Caco-2 (cell line): ENCODE measurements at regions of chr1 and their contacts with region 1.

Region 1: GRCh38 chr1:91282695-91283420 is 121.8 kb downstream of the HFM1 start:
- DNase-seq: peak; percentile 41 to 53
- H3K4me3 ChIP-seq: no peak overlapping the region
- H3K4me3 Mint-ChIP-seq: no peak overlapping the region
- H3K27ac Mint-ChIP-seq: no peak overlapping the region
- H3K4me1 ChIP-seq: no peaks in the 10 kb centered on the region
- H3K4me1 Mint-ChIP-seq: no peaks in the 10 kb centered on the region
- H3K27me3 ChIP-seq: no peaks in the 10 kb centered on the region
- H3K27me3 Mint-ChIP-seq: no peaks in the 10 kb centered on the region
- CTCF ChIP-seq: peak; percentile 57 to 63

Region 2: DNA sequence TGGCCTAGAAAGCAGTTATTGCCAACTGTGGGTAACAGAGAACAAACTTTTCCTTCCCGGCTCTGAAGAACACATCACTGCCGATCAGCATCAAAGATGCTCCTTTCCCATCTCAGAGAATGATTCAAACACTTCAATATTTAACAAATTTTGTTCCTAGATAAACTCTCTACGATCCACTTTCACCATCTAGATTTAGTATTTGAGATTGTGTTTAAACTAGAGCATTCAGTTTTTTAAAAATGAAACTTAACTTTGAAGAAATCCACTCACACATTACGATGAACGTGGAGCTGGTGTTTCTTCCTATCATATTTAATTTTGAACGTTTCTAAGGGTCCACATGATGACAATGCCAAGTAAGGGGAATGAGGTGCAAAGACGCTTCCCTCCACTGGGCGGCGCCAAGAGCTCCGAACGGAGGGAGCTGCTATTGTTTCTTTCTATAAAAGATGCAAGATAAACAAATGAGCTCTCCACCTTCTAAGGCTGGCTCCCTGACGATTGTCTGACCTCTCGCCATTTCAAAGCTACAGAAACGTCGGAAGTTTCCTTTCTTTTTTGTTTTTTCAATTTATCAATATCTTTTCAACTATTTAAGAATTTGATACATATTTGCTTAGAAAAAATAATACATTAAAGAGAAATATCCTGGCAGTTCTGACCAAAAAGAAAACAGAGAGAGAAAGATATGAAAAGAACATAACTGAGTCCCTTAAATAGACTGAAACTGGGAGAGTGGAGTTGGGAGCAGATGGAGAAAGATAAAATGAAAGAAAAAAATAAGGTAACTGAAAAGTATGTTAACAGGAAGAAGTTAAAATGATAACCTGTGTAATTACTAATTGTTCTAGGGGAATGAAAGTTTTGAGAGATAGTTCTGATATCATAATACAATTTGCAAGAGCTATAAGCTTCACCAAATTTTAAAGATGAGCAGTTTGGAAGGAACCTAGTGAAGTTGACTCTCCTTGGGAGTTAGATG is 561.4 kb before region 1 on chr1:
- CTCF ChIA-PET with region 1: no interaction called
- POLR2A ChIA-PET with region 1: no interaction called
- intact Hi-C with region 1: loop called (anchors 2 kb)
- DNase-seq: peak in 1 of 2 experiments; percentile 57
- H3K4me3 ChIP-seq: no peak overlapping the region
- H3K4me3 Mint-ChIP-seq: no peak overlapping the region
- H3K27ac Mint-ChIP-seq: no peak overlapping the region
- H3K4me1 ChIP-seq: no peaks in the 10 kb centered on the region
- H3K4me1 Mint-ChIP-seq: no peaks in the 10 kb centered on the region
- H3K27me3 ChIP-seq: no peaks in the 10 kb centered on the region
- H3K27me3 Mint-ChIP-seq: peaks cover 5% of the 10 kb centered on the region
- CTCF ChIP-seq: peak; percentile 55 to 68

Region 3: DNA sequence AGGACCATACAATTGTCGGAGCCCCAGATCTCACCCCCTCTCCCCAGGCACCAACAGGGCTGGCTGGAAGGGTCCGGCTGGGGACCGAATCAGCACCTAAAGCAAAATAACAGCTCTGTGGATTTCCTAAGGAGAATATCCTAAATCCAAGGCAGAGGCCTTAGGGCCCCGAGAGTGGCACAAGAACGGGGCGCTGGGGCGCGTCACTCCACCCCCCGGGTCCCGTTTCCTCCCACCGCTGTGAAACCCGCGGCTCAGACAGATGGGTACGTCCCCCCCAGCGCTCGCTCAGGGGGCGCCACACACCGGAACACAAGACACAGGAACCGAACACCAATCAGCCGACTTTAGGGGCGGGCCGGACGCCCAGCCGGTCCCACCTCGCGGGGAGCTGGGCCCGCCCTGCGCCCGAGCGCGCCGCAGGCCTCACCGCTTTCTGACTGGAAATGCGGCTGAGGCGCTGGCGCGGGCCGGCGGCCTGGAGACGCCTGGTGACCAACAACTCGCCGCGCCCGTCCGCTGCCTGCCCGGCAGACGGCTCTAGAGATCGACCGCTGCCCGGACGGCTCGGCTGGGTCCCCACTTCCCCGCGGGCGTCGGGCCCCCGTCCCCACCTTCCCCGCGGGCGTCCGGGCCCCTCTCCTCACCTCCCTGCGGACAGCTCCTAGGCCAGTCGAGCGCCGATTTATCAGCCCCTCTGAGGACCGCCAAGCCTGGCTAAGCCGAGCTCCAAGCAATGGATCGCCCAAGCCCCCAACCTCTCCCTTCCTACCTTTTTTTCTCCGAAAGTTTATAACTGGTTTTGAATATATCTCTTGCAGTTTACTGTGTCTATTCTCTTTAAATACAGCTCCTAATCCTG is 121.5 kb after region 1 on chr1 and contains the start of gene HFM1:
- CTCF ChIA-PET with region 1: no interaction called
- POLR2A ChIA-PET with region 1: no interaction called
- intact Hi-C with region 1: loop called (anchors 1 kb)
- DNase-seq: peak; percentile 49 to 58
- H3K4me3 ChIP-seq: peak within 1 kb of the TSS; percentile 50
- H3K4me3 Mint-ChIP-seq: peak within 1 kb of the TSS; percentile 67
- H3K27ac Mint-ChIP-seq: no peak within 1 kb of the TSS
- H3K4me1 ChIP-seq: no peaks in the 10 kb centered on the region
- H3K4me1 Mint-ChIP-seq: no peaks in the 10 kb centered on the region
- H3K27me3 ChIP-seq: no peaks in the 10 kb centered on the region; the same call in 1 of the 2 replicates
- H3K27me3 Mint-ChIP-seq: peaks cover 6% of the 10 kb centered on the region
- CTCF ChIP-seq: no peak
- total RNA-seq, gene HFM1: 0.26 and 0.48 TPM in 2 replicates

Region 4: GRCh38 chr1:91500756-91501522 is 218.1 kb after region 1 on chr1 and contains the start of gene CDC7:
- CTCF ChIA-PET with region 1: interaction called, 3 read pairs
- POLR2A ChIA-PET with region 1: no interaction called
- intact Hi-C with region 1: loop called (anchors 2 kb)
- DNase-seq: peak; percentile 90 to 92
- H3K4me3 ChIP-seq: peak within 1 kb of the TSS; percentile 54
- H3K4me3 Mint-ChIP-seq: no peak within 1 kb of the TSS
- H3K27ac Mint-ChIP-seq: no peak within 1 kb of the TSS
- H3K4me1 ChIP-seq: peaks cover 11% of the 10 kb centered on the region
- H3K4me1 Mint-ChIP-seq: peaks cover 18% of the 10 kb centered on the region
- H3K27me3 ChIP-seq: no peaks in the 10 kb centered on the region
- H3K27me3 Mint-ChIP-seq: no peaks in the 10 kb centered on the region
- CTCF ChIP-seq: peak; percentile 38 to 64
- total RNA-seq, gene CDC7: 17.6 and 19.4 TPM in 2 replicates

Region 5: GRCh38 chr1:91929250-91929649 is 646.4 kb after region 1 on chr1:
- CTCF ChIA-PET with region 1: no interaction called
- POLR2A ChIA-PET with region 1: no interaction called
- intact Hi-C with region 1: loop called (anchors 5 kb)
- DNase-seq: no peak
- H3K4me3 ChIP-seq: no peak overlapping the region
- H3K4me3 Mint-ChIP-seq: no peak overlapping the region
- H3K27ac Mint-ChIP-seq: peak overlapping the region; percentile 25
- H3K4me1 ChIP-seq: no peaks in the 10 kb centered on the region
- H3K4me1 Mint-ChIP-seq: peaks cover 8% of the 10 kb centered on the region
- H3K27me3 ChIP-seq: no peaks in the 10 kb centered on the region
- H3K27me3 Mint-ChIP-seq: no peaks in the 10 kb centered on the region
- CTCF ChIP-seq: no peak